ENCODE measurements at regions of chr12 and their contacts with region 1.

Region 1: DNA sequence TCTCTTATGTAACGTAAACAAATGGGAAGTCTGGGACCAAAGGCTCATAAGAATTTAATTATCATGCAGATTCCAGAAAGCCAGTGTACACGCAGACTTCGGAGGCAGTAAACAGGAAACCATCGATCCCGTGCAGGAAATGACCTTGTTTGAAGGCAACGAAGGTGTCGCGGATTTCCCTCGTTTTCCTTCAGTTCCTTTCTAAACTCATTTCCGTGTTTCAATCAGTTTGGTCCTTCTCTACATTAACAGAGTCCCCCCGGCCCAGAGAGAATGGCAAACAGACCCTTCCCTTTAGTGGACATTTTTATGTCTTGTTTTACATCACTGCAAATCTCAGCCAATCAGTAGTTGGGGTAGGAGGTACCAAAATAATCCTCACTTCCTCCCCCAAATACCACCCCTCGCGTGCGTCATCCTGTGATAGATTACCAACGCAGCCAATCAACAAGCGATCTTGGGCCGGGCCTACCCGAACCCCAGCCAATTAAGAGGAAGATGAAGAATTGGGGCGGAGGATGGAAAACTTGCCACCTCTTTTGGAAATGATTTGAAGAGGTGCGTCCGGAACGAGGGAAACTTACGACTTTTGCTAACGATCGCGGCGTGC is 6.1 kb upstream of the FOXJ2 start:
- DNase-seq: peak; percentile 98
- H3K4me3 Mint-ChIP-seq: peak overlapping the region; percentile 88
- H3K27ac Mint-ChIP-seq: peak overlapping the region; percentile 100
- H3K4me1 Mint-ChIP-seq: peaks cover 9% of the 10 kb centered on the region
- H3K27me3 Mint-ChIP-seq: no peaks in the 10 kb centered on the region

Region 2: GRCh38 chr12:7989827-7990551 is 36.4 kb before region 1 on chr12:
- CTCF ChIA-PET with region 1: no interaction called
- POLR2A ChIA-PET with region 1: interaction called, 3 read pairs
- intact Hi-C with region 1: loop called (anchors 1 kb)
- DNase-seq: peak; percentile 90
- H3K4me3 Mint-ChIP-seq: peak overlapping the region; percentile 44
- H3K27ac Mint-ChIP-seq: peak overlapping the region; percentile 87
- H3K4me1 Mint-ChIP-seq: peaks cover 40% of the 10 kb centered on the region
- H3K27me3 Mint-ChIP-seq: no peaks in the 10 kb centered on the region

Measured in activated CD4-positive, alpha-beta memory T cell treated with anti-CD3 and anti-CD28 coated beads for 36 hours (primary cell).